PC-3 (cell line): ENCODE measurements at regions of chr2 and their contacts with region 1.

Region 1: GRCh38 chr2:68487773-68488355 is 20.5 kb downstream of the APLF start:
- DNase-seq: peak; percentile 65
- ATAC-seq: peak; percentile 64
- H3K4me3 ChIP-seq: no peak overlapping the region
- H3K27ac ChIP-seq: no peak overlapping the region
- H3K4me1 ChIP-seq: no peaks in the 10 kb centered on the region
- H3K27me3 ChIP-seq: no peaks in the 10 kb centered on the region
- CTCF ChIP-seq: peak; percentile 76

Region 2: DNA sequence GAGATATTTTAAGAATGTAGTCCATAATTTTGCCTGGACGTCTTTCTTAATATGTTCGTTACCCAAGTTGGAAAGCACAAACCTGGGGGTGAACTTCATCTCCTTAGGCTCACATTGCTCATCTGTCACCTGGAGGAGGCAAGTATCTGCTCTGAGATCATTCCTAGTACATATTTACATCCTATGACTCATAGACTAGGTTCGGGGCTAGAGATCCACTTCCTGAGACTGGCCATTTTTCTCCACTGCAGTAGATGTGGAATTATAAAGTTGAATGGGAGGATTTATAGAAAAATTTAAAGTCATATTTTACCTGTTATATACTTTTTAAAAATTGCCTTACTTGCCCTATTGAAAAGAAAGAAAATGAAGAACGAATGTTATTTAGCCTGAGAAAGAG is 78.0 kb after region 1 on chr2:
- CTCF ChIA-PET with region 1: no interaction called
- POLR2A ChIA-PET with region 1: no interaction called
- intact Hi-C with region 1: no loop called
- DNase-seq: peak; percentile 87
- ATAC-seq: peak; percentile 94
- H3K4me3 ChIP-seq: no peak overlapping the region
- H3K27ac ChIP-seq: peak overlapping the region; percentile 56
- H3K4me1 ChIP-seq: peaks cover 45% of the 10 kb centered on the region
- H3K27me3 ChIP-seq: no peaks in the 10 kb centered on the region
- CTCF ChIP-seq: no peak

Region 3: GRCh38 chr2:68594674-68595492 is 107.0 kb after region 1 on chr2:
- CTCF ChIA-PET with region 1: interaction called, 56 read pairs
- POLR2A ChIA-PET with region 1: interaction called, 5 read pairs
- intact Hi-C with region 1: loop called (anchors 1 kb)
- DNase-seq: peak; percentile 66
- ATAC-seq: peak; percentile 74
- H3K4me3 ChIP-seq: peak overlapping the region; percentile 25; the same call in 1 of the 2 replicates
- H3K27ac ChIP-seq: no peak overlapping the region
- H3K4me1 ChIP-seq: peaks cover 11% of the 10 kb centered on the region
- H3K27me3 ChIP-seq: no peaks in the 10 kb centered on the region
- CTCF ChIP-seq: peak; percentile 96

Region 4: DNA sequence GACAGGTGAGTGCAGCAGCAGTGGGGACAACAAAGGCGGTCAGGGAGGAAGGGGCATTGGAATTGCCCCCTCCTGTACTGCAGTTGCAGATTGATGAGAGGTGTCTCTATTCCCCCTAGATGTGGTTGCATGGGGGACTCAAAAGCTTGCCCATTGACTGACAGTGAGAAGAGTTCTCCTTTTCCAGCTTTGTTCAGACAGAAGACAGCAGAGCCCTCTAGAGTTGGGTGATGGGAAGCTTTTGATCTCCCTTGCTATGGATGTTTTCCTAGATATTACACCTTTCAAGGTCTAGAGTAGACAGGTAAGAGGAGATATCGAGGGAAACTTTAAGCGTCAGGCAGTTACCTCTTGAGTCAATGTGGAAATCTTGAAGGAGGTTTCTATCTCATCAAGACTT is 158.4 kb after region 1 on chr2:
- CTCF ChIA-PET with region 1: interaction called, 11 read pairs
- POLR2A ChIA-PET with region 1: no interaction called
- intact Hi-C with region 1: loop called (anchors 1 kb)
- DNase-seq: peak; percentile 46
- ATAC-seq: peak; percentile 19; the same call in 1 of the 2 replicates
- H3K4me3 ChIP-seq: no peak overlapping the region
- H3K27ac ChIP-seq: no peak overlapping the region
- H3K4me1 ChIP-seq: no peaks in the 10 kb centered on the region
- H3K27me3 ChIP-seq: peaks cover 34% of the 10 kb centered on the region
- CTCF ChIP-seq: peak; percentile 61

Region 5: DNA sequence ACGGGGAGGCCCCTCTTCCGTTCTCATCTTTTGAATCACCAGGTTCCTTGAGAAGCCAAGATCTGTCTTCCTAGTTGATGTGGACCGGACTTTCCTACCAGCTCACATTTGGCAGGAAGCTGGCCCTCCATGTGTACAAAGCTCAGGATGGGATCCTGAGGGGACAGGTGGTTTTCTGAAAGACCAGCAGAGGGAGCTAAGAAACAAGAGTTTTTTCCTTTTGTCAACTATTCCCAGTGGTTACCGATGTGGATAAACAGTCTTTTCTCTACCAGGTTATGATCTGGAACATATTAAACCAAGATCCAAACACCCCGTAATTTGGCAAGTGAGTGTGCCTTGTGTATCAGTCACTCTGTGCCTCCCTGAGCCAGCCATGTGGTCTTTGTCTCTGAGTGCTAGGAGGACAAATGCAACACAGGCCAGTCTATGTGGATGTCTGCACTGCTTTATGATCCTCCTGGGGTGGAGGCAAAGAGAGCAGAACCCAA is 221.6 kb after region 1 on chr2:
- CTCF ChIA-PET with region 1: interaction called, 16 read pairs
- POLR2A ChIA-PET with region 1: no interaction called
- intact Hi-C with region 1: no loop called
- DNase-seq: peak; percentile 79
- ATAC-seq: peak; percentile 88
- H3K4me3 ChIP-seq: peak overlapping the region; percentile 7; the same call in 1 of the 2 replicates
- H3K27ac ChIP-seq: no peak overlapping the region
- H3K4me1 ChIP-seq: no peaks in the 10 kb centered on the region; the same call in 1 of the 2 replicates
- H3K27me3 ChIP-seq: peaks cover 14% of the 10 kb centered on the region; the same call in 1 of the 2 replicates
- CTCF ChIP-seq: peak; percentile 85

Region 6: DNA sequence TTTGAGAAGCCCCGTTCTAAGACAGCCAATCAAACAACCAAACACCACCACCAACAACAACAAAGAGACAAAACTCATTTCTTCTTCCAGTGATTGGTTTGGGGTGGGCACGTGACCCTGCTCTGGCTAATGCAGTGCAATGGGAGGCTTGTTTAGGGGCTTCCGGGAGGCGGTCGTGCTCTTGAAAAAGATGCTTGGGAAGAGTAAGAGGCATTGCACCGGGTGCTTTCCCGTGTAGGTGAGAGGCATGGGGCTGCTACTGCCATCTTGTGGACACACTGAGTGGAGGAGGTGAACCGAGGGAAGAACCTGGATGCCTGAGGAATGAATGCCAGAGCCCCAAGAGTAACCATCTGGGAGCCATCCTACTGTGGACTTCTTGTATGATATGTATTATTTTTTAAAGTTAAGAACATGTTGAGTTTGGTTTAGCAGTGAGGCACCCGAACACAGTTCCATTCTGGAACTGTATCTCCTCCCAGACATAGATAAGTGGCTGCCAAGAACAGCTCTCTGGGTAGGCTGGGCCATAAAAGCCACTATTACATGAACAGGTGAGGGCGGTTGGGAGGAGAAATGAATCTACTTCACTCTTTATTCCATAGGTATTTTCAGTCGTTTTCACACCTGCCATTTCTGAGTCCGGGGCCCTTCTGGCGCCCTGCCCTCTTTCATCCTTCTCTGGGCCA is 227.6 kb after region 1 on chr2:
- CTCF ChIA-PET with region 1: no interaction called
- POLR2A ChIA-PET with region 1: no interaction called
- intact Hi-C with region 1: loop called (anchors 1 kb)
- DNase-seq: peak; percentile 86
- ATAC-seq: peak; percentile 94
- H3K4me3 ChIP-seq: no peak overlapping the region
- H3K27ac ChIP-seq: no peak overlapping the region
- H3K4me1 ChIP-seq: 0 out of 2 replicates have a peak, but pooled peaks cover 5% of the 10 kb centered on the region
- H3K27me3 ChIP-seq: no peaks in the 10 kb centered on the region
- CTCF ChIP-seq: peak; percentile 85